ENCODE measurements at regions of chr4 and their contacts with region 1.

Region 1: DNA sequence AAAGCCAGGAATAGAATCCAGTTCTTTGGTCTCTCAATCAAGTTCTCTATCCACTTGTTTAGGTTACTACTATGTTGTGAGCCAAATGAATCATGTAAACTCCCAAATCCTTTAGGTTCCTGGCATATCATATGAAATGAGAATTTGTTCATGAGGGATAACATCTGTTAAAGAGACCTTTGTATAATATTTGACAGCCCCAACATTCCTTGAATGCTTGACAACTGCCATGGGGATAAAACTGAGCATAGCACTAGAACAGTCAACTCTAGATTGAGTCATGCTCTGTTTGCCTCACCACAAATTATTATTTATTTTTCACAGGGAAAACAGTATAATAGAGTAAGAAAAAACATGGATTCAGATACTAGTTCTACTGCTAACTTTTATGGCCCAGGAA is 93.3 kb downstream of the NAA11 start:
- DNase-seq: no peak
- H3K4me3 ChIP-seq: no peak overlapping the region
- H3K27ac ChIP-seq: no peak overlapping the region
- H3K4me1 ChIP-seq: no peaks in the 10 kb centered on the region
- H3K27me3 ChIP-seq: no peaks in the 10 kb centered on the region
- CTCF ChIP-seq: no peak
- EP300 ChIP-seq: no peak
- POLR2A ChIP-seq: no peak

Region 2: DNA sequence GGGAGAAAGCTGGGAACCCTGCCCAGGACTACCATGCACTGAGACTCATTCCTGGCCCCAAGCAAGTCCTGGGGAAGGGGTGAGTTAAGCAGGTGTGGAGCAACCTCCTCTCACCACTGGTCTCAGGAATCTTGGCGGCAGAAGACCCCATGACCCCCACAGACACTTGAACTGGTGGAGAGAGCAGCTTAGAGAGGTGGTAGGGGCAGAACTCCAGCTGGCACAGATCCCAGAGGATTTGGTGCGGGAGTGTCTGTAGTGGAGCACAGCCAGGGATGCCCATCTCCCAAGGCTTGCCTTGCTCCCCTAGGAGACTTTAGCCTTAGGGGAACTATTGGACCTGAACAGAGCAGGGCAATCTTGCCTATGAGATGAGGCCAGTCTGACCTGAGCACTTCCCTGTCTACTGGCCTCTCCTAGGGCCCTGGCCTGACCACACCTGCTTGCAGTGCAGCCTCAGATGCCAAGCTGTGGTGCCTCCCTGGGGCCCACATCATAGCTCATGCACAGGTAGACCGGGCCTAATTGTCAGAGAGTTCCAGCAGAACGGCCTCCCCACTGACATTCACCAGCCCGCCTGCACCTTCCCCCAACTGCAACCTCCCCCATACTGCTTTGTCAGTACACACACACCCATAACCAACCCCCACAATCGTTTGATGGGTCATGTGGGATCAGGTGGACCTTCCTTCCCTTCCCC is 15.3 kb after region 1 on chr4:
- in situ Hi-C with region 1: no loop called
- intact Hi-C with region 1: loop called (anchors 1 kb)
- DNase-seq: no peak
- H3K4me3 ChIP-seq: no peak overlapping the region
- H3K27ac ChIP-seq: no peak overlapping the region
- H3K4me1 ChIP-seq: no peaks in the 10 kb centered on the region
- H3K27me3 ChIP-seq: no peaks in the 10 kb centered on the region
- CTCF ChIP-seq: no peak
- EP300 ChIP-seq: no peak
- POLR2A ChIP-seq: no peak

Region 3: DNA sequence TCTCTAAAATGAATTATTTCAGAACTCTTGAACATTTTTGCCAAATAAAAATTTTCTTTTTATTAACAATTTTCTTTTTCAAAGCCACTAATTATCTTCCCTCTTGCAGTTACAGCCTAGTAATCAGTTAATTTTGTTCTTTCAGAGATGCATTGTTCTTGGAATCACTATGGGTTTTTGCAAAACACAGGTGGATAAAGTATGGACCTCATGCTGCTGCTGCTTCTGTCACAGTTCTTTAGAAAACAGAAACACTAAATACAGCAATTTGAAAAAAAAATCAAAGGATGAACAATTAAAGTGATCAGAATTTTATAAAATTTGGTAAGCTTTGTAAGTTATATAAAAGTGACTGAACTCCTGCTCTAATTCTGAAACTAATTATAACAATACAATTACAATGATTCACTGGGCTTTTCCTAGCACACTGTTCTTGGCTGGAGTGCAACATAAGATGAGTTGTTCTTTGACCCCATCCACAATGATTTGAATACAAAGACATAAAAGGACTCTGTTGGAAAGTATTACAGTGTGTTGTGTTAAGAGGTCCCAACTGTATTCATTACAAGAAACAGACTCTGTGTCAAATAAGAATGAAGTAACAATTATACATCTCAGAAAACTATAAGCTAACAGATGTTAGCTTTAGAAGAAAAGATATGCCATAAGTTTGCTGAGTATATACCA is 234.8 kb after region 1 on chr4:
- in situ Hi-C with region 1: no loop called
- intact Hi-C with region 1: no loop called
- DNase-seq: no peak
- H3K4me3 ChIP-seq: no peak overlapping the region
- H3K27ac ChIP-seq: peak overlapping the region in 2 of 4 donors; percentile 13 to 38
- H3K4me1 ChIP-seq: peaks cover 0 to 4% (median 0%) of the 10 kb centered on the region in 4 donors
- H3K27me3 ChIP-seq: no peaks in the 10 kb centered on the region
- CTCF ChIP-seq: no peak
- EP300 ChIP-seq: no peak
- POLR2A ChIP-seq: no peak

Measured in transverse colon (tissue), 4 donors.